Lower leg skin (tissue), 4 donors: ENCODE measurements at regions of chr14 and their contacts with region 1.

Region 1: GRCh38 chr14:37763266-37763665 is 167.8 kb downstream of the TTC6 start:
- DNase-seq: no peak
- H3K4me3 ChIP-seq: no peak overlapping the region
- CTCF ChIP-seq: no peak
- POLR2A ChIP-seq: no peak

Region 2: DNA sequence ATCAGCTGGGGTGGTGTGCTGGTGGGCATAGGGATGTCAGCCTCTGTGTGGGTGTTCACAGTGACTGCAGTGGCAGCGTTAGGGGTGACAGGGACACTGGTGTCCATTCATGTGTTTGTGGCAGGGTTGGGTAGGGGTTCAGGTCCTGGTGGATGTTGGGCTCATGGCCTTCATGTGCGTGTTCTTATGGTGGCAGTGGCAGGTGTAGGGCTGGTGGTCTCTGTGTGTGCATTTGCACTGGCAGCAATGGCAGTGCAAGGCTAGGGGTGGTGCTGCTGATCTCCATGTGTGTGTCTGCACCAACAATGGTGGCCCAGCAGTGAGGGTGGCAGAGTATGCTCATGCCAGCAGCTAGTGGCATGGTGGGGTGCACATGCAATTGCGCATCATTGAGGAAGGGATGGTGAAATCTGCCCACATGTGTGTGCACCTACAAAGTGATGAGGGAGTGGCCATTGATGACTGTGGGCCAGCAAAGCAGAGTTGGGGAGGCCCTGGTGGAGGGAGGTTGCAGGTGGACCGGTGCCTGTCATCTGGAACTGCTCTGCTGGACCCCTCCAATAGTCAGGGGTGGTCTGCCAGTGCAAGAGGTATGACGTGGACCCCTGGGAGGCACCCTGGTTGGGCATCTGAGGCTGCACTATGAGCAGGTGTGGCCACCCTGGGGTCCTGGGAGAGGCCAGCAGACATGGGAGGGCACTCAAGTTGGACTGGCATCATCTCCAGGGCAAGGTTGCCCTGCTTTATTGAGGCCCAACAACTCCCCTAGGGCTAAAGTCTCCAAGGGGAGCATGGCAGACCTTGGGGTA is 15.1 kb after region 1 on chr14:
- intact Hi-C with region 1: no loop called
- DNase-seq: no peak
- H3K4me3 ChIP-seq: no peak overlapping the region
- CTCF ChIP-seq: no peak
- POLR2A ChIP-seq: no peak

Region 3: DNA sequence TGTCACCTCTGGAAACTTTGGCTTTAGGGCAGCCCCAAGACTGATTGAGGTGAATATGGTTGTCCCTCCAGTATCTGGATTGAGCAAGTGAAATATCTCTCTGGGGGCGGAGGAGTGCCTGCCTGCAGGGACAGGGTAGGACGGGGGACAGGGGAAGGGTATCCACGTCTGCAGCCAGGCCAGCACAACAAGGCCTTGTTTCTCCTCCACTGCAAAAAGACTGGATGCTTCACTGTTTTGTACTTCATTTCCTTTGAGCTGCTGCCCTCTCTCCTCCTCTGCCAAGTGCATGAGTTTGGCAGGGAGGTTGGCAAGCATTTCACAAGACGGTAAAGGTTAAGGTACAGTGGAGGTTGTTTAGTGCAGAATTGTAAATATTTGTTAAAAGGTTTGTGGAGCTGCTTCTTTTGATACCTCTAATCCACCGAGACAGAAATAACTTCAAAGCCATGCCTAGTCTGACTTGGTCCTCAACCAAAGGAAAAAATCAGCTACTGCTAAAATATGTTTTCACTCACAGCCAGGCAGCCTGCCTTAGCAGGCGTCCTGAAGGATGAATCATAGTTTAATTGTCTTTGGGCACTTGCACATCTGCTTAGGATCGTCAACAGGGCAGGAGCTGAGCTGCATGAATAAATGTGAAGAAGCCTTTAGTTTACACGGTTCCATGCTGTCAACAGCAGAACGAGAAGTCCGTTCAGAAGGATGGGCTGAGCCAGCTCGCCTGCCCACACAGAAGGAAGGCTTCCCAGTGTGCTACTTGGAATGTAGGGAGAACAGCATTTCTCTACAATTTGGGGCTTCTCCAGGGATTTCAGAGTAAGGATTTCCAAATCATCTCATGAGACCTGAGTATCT is 101.8 kb after region 1 on chr14:
- intact Hi-C with region 1: no loop called
- DNase-seq: no peak
- H3K4me3 ChIP-seq: no peak overlapping the region
- CTCF ChIP-seq: no peak
- POLR2A ChIP-seq: no peak

Region 4: GRCh38 chr14:39342768-39343167 is 1579.5 kb after region 1 on chr14:
- intact Hi-C with region 1: loop called (anchors 5 kb)
- DNase-seq: no peak
- H3K4me3 ChIP-seq: no peak overlapping the region
- CTCF ChIP-seq: no peak
- POLR2A ChIP-seq: no peak